Activated naive CD8-positive, alpha-beta T cell treated with anti-CD3 and anti-CD28 coated beads, Interleukin-2, amount 10 ng/mL, durations not matched to agents 7 days and 5 days (primary cell): ENCODE measurements at regions of chr18 and their contacts with region 1.

Region 1: GRCh38 chr18:46173393-46174341 is 69.5 kb downstream of the HAUS1 start:
- DNase-seq: peak; percentile 96
- ATAC-seq: peak; percentile 90
- H3K4me3 Mint-ChIP-seq: peak overlapping the region; percentile 99
- H3K27ac Mint-ChIP-seq: peak overlapping the region; percentile 99
- H3K4me1 Mint-ChIP-seq: peaks cover 44% of the 10 kb centered on the region
- H3K27me3 Mint-ChIP-seq: no peaks in the 10 kb centered on the region

Region 2: GRCh38 chr18:46148810-46149209 is 24.9 kb before region 1 on chr18:
- POLR2A ChIA-PET with region 1: interaction called, 15 read pairs
- DNase-seq: peak; percentile 49
- ATAC-seq: peak; percentile 56
- H3K4me3 Mint-ChIP-seq: peak overlapping the region; percentile 8
- H3K27ac Mint-ChIP-seq: peak overlapping the region; percentile 66
- H3K4me1 Mint-ChIP-seq: peaks cover 36% of the 10 kb centered on the region
- H3K27me3 Mint-ChIP-seq: no peaks in the 10 kb centered on the region

Region 3: DNA sequence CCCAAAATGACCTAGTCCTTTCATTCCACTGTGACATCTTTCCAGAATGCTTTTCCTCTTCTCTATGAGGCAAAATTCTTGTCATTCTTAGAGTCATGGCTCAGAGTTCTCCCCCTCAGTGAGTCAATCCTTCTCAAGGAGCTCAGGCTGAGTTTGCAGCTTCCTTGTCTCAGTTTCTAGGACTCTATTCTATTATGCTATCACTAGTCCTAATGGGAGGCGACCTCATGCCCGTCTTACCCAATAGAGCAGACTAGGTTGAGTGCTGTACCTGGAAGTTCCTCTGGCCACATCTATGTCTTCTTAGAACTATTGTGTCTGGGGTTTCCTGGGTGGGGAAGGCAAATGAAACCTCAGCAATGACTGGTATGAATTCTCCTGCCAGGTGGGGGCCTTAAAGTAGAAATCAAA is 18.0 kb before region 1 on chr18:
- POLR2A ChIA-PET with region 1: interaction called, 41 read pairs
- DNase-seq: no peak
- ATAC-seq: peak; percentile 90
- H3K4me3 Mint-ChIP-seq: peak overlapping the region; percentile 81
- H3K27ac Mint-ChIP-seq: peak overlapping the region; percentile 98
- H3K4me1 Mint-ChIP-seq: peaks cover 61% of the 10 kb centered on the region
- H3K27me3 Mint-ChIP-seq: no peaks in the 10 kb centered on the region

Region 4: GRCh38 chr18:46161703-46162396 is 11.8 kb before region 1 on chr18:
- POLR2A ChIA-PET with region 1: interaction called, 41 read pairs
- DNase-seq: no peak
- ATAC-seq: no peak
- H3K4me3 Mint-ChIP-seq: no peak overlapping the region
- H3K27ac Mint-ChIP-seq: no peak overlapping the region
- H3K4me1 Mint-ChIP-seq: peaks cover 43% of the 10 kb centered on the region
- H3K27me3 Mint-ChIP-seq: no peaks in the 10 kb centered on the region

Region 5: DNA sequence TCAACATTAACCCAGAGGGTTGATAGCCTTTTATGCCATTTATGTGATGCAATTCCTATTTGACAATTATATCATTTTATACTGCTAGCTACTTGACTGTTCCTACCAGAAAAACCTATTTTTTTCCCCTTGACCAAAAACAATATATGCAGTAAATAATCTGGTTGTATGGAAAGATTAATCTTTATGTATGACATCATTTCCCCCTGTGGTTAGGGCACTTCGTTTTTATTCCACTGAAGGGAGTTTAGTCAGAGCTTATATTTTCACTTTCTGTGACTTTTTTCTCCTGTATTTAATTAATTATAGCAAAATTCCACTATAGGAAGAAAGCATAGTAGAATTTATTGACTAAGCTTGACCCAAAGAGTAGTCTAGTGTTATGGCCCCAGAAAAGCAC is 38.1 kb after region 1 on chr18:
- POLR2A ChIA-PET with region 1: interaction called, 13 read pairs
- DNase-seq: no peak
- ATAC-seq: peak; percentile 52
- H3K4me3 Mint-ChIP-seq: peak overlapping the region; percentile 45
- H3K27ac Mint-ChIP-seq: peak overlapping the region; percentile 83
- H3K4me1 Mint-ChIP-seq: peaks cover 54% of the 10 kb centered on the region
- H3K27me3 Mint-ChIP-seq: no peaks in the 10 kb centered on the region

Region 6: GRCh38 chr18:46250084-46250811 is 76.6 kb after region 1 on chr18:
- POLR2A ChIA-PET with region 1: interaction called, 15 read pairs
- DNase-seq: no peak
- ATAC-seq: peak; percentile 93
- H3K4me3 Mint-ChIP-seq: peak overlapping the region; percentile 78
- H3K27ac Mint-ChIP-seq: peak overlapping the region; percentile 94
- H3K4me1 Mint-ChIP-seq: peaks cover 52% of the 10 kb centered on the region
- H3K27me3 Mint-ChIP-seq: no peaks in the 10 kb centered on the region